GM23248 (cell line): ENCODE measurements at regions of chr4 and their contacts with region 1.

Region 1: GRCh38 chr4:89039730-89040338 is 17.2 kb downstream of the FAM13A start:
- DNase-seq: no peak
- H3K4me3 ChIP-seq: no peak overlapping the region
- H3K27ac ChIP-seq: no peak overlapping the region
- H3K4me1 ChIP-seq: no peaks in the 10 kb centered on the region
- H3K27me3 ChIP-seq: no peaks in the 10 kb centered on the region

Region 2: GRCh38 chr4:88706574-88706973 is 333.3 kb before region 1 on chr4:
- in situ Hi-C with region 1: loop called (anchors 10 kb)
- DNase-seq: peak; percentile 83
- H3K4me3 ChIP-seq: no peak overlapping the region
- H3K27ac ChIP-seq: peak overlapping the region; percentile 45
- H3K4me1 ChIP-seq: peaks cover 22% of the 10 kb centered on the region
- H3K27me3 ChIP-seq: no peaks in the 10 kb centered on the region